Left cardiac atrium (tissue), 4 donors: ENCODE measurements at regions of chr1 and their contacts with region 1.

Region 1: GRCh38 chr1:45569962-45570581 is 13.8 kb upstream of the NASP start:
- DNase-seq: peak; percentile 67
- ATAC-seq: peak; percentile 60 to 70

Region 2: DNA sequence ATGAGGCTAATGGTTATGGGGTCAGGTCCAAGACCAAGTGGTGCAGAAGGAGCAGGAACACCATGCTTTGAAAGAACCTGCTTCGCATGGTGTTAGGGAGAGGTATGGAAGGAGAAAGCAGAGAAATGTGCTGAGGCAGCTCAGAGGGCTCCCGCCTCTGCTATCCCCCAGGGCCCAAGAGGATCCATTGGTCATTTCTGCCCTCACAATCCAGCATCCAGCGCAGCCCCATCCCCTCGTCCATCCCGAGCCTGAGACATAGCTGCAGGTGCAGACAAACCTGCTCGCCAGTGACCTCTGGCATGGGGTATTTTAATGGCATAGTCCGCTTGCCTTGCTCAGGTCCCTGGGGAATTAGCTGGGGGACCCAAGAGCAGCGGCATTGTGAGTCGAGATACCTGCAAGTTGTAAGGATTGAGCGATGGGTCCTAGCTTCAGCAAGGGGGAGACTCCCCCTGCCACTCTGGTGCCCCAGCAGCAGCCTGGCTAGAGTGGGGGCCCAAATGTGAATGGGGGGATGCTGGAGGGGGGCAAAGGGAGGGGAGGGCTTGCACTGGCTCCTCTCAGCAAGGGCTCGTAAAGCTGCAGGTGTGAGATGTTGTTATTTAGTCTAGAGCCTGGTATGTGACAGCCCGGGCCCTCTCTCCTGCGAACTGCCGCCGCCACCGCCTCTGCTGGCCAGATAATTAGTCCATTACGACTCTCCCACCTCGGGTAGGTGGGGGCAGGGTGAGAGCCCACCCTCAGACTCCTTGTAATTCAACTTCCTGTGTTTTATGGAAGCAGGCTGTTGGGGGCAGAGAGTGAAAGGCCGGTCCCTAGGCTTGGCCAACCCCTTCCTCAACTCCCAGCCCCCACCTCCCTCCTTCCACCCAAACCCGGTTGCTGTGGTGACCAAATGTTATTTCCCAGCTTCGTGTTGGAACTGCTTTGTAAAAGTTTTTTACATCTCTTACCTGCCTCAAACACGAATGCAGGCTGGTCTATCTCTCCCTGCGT is 1046.2 kb before region 1 on chr1:
- intact Hi-C with region 1: no loop called
- DNase-seq: no peak
- ATAC-seq: no peak

Region 3: DNA sequence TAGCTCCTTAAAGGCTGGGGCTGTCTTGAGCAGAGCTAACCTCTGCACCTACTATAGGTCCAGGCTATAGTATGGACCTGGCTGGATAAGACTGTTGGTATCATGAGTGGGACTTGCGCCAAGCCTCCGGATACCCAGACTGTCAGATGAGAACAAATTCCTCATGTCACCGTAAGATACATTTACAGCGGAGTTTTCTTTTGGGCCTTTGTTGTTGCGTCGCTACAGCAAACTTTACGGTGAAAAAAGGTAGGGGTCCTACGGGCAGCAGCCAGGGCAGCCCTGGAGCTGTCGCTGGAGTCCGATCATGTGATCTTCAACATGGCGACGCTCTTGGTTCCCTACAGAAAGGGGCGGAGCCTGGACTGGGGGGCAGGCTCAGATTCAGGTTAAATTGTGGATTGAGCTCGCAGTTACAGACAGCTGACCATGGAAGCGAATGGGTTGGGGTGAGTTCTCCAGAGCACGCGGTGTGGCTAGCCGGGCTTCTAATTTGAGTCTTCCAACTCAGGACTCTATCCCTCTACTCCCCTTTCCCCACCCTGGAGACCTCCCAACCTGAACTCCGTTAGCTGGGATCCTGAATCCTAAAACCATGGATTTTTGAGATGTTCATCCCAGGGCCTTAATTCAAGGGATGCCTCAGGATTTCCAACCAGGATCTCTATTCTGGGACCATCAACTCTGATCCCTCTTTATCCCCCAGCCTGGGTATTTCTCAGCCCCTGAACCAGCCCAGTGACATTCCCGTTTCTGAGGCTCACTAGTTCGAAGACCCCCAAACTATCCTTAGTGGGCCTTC is 558.0 kb before region 1 on chr1 and contains the start of gene UROD:
- intact Hi-C with region 1: loop called in 1 of 2 experiments (anchors 10 kb)
- DNase-seq: peak; percentile 94
- ATAC-seq: peak; percentile 93
- total RNA-seq, gene UROD: 63.4 to 65.1 TPM

Region 4: GRCh38 chr1:45187725-45188124 is 382.3 kb before region 1 on chr1:
- intact Hi-C with region 1: no loop called
- DNase-seq: no peak
- ATAC-seq: no peak

Region 5: DNA sequence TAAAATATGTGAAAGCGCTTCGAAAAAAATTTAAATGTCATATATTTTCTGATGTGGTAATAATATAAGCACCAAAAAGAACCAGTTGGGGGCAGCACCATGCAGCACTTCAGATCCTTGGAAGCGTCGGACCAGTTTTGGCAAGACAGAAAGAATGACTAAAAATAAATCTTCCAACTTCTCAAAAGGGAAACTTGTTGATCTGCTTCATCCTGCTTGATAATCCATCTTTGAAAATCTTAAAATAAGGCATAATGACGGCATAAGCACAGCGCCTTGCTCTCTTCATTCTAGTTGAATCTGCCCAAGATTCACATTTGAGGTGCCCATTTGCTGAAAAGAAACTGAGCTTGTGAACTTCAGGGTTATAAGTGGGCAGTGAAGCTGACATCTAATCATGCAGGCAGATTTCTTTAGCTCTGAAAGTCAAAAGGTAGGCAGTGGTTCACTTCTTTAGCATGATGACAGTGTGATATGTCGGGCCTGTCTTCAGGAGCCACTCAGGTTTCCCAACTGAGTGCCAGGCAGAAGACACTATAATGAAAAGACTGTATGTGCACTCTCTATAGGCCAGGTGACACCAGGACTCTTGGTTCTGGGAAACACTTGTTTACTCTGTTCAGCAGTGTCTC is 210.1 kb before region 1 on chr1:
- intact Hi-C with region 1: loop called (anchors 5 kb)
- DNase-seq: peak; percentile 75
- ATAC-seq: peak; percentile 82 to 88

Region 6: GRCh38 chr1:45512641-45513054 is 57.4 kb before region 1 on chr1:
- intact Hi-C with region 1: loop called in 1 of 2 experiments (anchors 5 kb)
- DNase-seq: peak; percentile 64
- ATAC-seq: peak; percentile 49 to 78

Region 7: DNA sequence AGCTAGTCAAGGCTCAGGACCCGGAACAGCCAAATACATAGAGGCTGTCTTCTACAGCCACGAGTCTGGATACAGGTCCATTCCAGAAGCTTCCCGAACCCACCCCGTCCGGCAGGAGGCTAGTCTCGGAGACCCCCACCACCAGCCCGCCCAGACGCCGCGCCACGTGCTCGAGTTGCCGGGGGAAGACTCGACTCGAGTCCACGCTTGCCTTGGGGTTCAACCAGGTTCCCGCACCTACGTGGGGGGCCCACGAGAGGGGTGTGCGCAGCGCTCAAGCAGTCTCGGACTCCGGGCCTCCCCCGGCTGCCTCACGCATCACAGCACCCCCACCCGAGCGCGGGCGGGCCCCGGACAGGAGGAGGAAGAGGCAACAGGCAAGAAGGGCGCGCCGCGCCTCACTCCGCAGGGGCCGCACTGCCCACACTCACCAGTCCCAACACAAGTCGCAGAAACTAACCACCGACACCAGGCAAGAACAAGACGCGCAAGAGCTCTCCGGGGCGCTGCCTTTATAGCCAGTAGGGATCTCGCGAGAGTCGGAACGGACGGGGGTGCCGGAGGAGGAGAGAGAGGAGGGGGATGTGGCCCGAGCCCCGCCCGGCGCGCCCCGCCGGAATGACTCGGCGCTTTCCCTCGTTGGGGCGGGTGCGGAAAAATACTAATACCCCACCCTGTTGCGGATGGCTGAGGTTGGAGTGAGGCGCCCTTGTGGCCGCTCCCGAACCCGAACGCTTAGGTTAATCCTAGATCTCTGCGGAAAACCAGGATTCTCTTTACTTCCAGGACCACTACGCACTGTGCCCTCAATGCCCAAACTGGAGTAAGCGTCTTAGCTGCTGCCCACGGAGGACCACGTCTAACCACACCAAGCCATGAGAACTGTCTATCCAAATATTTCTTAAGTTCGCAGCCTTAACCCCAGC is 48.4 kb before region 1 on chr1 and contains the start of gene PRDX1:
- intact Hi-C with region 1: loop called in 1 of 2 experiments (anchors 5 kb)
- DNase-seq: peak; percentile 97
- ATAC-seq: peak; percentile 97 to 98
- total RNA-seq, gene PRDX1: 599 to 604 TPM